Activated naive CD4-positive, alpha-beta T cell treated with anti-CD3 and anti-CD28 coated beads for 36 hours (primary cell): ENCODE measurements at regions of chr6 and their contacts with region 1.

Region 1: GRCh38 chr6:127342946-127343808 is at the start of gene ECHDC1:
- DNase-seq: peak; percentile 81
- H3K4me3 Mint-ChIP-seq: no peak within 1 kb of the TSS
- H3K27ac Mint-ChIP-seq: no peak within 1 kb of the TSS
- H3K4me1 Mint-ChIP-seq: peaks cover 13% of the 10 kb centered on the region
- H3K27me3 Mint-ChIP-seq: no peaks in the 10 kb centered on the region
- total RNA-seq, gene ECHDC1: 40.1 to 41.4 TPM

Region 2: DNA sequence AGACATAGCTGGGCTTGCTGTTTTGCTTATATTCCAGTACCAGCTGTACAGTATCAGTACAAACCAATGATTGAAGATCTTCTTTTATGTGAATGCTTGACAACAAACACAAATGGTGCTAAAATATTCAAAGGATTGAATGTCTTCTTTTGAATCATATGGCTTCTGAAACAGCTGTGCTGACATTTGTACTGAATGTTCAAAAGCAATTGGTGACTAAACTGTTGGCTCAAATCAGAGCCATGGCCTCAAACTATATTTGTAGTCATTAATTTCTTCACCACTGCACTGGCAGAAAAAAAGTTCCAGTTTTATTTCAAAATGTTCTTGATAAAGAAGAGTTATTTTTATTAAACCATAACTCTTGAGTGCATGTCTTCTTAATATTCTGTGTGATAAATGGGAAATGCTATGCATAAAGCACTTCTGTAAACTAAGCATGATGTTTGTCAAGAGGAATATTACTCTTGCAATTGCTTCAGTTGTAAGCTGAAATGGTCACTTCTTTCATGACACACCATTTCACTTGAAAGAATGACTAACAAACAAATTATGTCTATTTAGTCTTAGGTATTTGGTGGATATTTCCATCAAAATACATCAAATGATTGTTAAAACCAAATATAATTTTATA is 1049.2 kb before region 1 on chr6:
- CTCF ChIA-PET with region 1: no interaction called
- intact Hi-C with region 1: no loop called
- DNase-seq: no peak
- H3K4me3 Mint-ChIP-seq: no peak overlapping the region
- H3K27ac Mint-ChIP-seq: no peak overlapping the region
- H3K4me1 Mint-ChIP-seq: no peaks in the 10 kb centered on the region
- H3K27me3 Mint-ChIP-seq: no peaks in the 10 kb centered on the region

Region 3: DNA sequence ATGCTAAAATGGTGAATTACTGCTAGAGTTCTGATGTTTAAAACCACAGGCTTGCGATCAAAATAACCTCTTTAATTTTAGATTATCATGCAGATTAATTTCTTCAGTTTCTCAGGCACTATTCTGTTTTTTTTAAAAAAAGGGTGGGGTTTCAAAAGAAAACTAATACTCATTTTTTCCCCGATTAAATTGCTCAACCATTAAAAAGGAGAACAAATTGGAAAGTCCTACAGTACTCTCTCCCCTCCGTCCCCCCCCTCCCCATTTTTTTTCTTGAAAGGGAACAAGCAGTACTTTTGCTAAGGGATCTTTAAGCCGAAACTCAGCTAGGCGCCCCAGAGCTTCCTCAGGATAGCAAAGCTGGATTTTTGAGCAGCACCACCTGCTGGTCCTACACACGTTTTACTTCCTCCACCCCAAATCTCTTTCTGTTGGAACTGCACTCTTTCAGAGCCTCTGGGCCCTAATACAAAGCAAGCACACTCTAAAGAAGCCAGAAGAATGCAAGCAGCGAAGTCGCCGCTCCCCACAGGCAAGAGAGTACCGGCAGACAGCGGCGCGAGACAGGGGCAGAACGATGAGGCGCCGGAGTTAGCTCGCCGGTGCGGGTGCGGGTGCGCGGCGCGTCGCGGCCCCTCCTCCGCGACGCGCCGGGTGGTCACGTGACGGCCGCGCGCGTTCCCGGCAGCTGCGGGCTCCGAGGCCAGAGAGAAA is 76.8 kb before region 1 on chr6 and contains the start of gene RNF146:
- CTCF ChIA-PET with region 1: no interaction called
- intact Hi-C with region 1: loop called (anchors 1 kb)
- DNase-seq: peak; percentile 74
- H3K4me3 Mint-ChIP-seq: peak within 1 kb of the TSS; percentile 100
- H3K27ac Mint-ChIP-seq: peak within 1 kb of the TSS; percentile 100
- H3K4me1 Mint-ChIP-seq: peaks cover 25% of the 10 kb centered on the region
- H3K27me3 Mint-ChIP-seq: no peaks in the 10 kb centered on the region
- total RNA-seq, gene RNF146: 9.7 to 10.8 TPM

Region 4: GRCh38 chr6:127302728-127303660 is 40.2 kb before region 1 on chr6:
- CTCF ChIA-PET with region 1: interaction called, 3 read pairs
- intact Hi-C with region 1: loop called (anchors 2 kb)
- DNase-seq: peak; percentile 72
- H3K4me3 Mint-ChIP-seq: no peak overlapping the region
- H3K27ac Mint-ChIP-seq: no peak overlapping the region
- H3K4me1 Mint-ChIP-seq: peaks cover 42% of the 10 kb centered on the region
- H3K27me3 Mint-ChIP-seq: no peaks in the 10 kb centered on the region

Region 5: DNA sequence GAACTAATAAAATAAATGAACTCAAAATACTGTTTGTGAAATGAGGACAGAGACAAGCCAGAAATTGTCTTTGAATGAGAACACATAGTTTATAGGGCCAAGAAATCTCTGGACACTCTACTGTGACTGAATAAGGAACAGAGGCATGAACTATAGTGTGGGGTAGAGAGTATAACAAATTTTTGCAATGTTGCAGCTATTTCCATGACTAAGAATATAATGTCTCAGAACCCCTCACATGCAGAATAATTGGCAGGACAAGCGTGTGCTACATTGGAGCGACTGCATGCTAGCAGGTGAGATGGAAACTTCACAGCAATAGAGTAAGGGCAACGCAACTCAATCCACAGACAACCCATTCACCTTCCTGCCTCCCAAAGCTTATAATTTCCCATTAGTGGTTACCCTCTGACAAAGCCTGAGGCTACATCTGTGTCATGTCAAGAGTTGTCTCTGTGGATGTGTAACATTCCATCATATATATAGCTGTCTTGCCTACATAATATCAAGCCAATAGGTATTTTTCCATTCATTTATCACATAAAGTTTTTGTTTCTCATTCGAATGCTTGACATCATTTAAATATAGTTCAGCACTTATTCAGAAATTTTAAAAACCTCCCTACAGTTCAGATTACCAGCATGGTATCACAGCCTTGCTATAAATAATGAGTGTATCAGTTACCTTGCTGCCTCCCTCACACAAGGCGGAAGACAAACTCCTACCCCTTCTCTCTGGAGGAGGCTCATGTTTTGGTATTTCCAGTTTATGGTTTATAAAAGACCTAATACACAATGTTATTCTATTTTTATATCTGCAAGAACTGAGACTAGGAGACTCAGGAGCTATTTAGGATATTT is 48.1 kb after region 1 on chr6:
- CTCF ChIA-PET with region 1: no interaction called
- intact Hi-C with region 1: no loop called
- DNase-seq: no peak
- H3K4me3 Mint-ChIP-seq: no peak overlapping the region
- H3K27ac Mint-ChIP-seq: no peak overlapping the region
- H3K4me1 Mint-ChIP-seq: no peaks in the 10 kb centered on the region
- H3K27me3 Mint-ChIP-seq: peaks cover 3% of the 10 kb centered on the region

Region 6: DNA sequence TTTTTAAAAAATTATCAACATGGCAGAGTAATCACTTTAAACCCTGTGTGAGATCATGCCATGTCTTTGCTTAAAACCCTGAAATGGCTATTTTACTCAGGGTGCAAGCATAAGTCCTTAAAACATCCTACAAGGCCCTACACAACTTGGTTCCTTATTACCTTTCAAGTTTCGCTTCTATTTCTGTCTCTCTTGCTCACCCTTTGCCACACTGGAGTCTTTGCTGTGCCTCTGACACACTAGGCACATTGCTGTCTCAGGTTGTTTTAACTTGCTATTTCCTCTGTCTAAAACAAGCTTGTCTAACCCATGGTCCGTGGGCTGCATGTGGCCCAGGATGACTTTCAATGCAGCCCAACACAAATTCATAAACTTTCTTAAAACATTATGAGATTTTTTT is 60.5 kb after region 1 on chr6:
- CTCF ChIA-PET with region 1: no interaction called
- intact Hi-C with region 1: loop called (anchors 5 kb)
- DNase-seq: peak; percentile 14
- H3K4me3 Mint-ChIP-seq: no peak overlapping the region
- H3K27ac Mint-ChIP-seq: peak overlapping the region; percentile 7
- H3K4me1 Mint-ChIP-seq: peaks cover 12% of the 10 kb centered on the region
- H3K27me3 Mint-ChIP-seq: no peaks in the 10 kb centered on the region

Region 7: DNA sequence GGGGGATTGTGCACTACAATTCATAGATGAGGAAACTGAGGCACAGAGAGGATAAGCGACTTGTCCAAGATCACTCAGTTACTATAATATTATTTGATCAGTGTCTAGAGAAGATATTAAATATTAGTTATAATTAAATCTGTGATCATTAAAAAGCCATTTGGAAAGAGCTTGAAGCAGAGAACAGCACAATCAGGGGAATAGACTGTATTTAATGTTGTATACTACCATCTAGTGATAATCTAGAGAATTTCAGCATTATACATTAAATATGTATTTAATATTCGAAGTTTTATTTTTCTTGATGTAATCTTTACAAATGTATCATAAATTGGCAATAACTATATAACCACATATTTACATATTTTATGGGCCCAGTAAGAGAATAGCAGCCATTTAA is 196.1 kb after region 1 on chr6:
- CTCF ChIA-PET with region 1: interaction called, 5 read pairs
- intact Hi-C with region 1: loop called (anchors 5 kb)
- DNase-seq: no peak
- H3K4me3 Mint-ChIP-seq: no peak overlapping the region
- H3K27ac Mint-ChIP-seq: no peak overlapping the region
- H3K4me1 Mint-ChIP-seq: no peaks in the 10 kb centered on the region
- H3K27me3 Mint-ChIP-seq: peaks cover 13% of the 10 kb centered on the region